CD14-positive monocyte (primary cell): ENCODE measurements at regions of chr1 and their contacts with region 1.

Region 1: DNA sequence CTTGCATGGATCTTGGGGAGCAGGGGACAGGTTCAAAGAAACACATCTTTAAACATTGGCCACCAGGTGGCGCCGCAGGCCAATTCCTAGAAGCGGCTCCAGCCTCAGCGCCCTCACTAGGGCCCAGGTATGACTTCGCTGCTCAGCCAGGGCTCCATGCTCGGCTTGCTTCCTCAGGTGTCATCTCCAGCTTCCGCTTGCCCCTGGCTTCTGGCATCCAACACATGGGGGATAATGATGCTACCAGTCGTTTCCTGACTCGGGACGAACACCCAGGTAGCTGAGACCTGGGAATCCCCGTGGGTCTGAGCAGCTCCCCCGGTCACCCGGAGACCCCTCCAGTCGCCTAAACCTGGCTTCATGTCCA is 8.5 kb upstream of the MEX3A start:
- DNase-seq: peak; percentile 67 to 86 (median 81)
- H3K4me3 ChIP-seq: peak overlapping the region in 1 of 3 experiments; percentile 60
- H3K4me3 Mint-ChIP-seq: peak overlapping the region in 1 of 2 donors; percentile 84
- H3K27ac ChIP-seq: peak overlapping the region; percentile 53 to 88
- H3K27ac Mint-ChIP-seq: peak overlapping the region; percentile 87 to 97 (median 93)
- H3K4me1 ChIP-seq: peaks cover 20 to 21% of the 10 kb centered on the region in 2 donors
- H3K4me1 Mint-ChIP-seq: peaks cover 22% of the 10 kb centered on the region
- H3K27me3 ChIP-seq: peaks cover 10 to 62% of the 10 kb centered on the region in 2 donors
- H3K27me3 Mint-ChIP-seq: peaks cover 66 to 82% (median 76%) of the 10 kb centered on the region in 3 donors
- CTCF ChIP-seq: peak; percentile 97

Region 2: DNA sequence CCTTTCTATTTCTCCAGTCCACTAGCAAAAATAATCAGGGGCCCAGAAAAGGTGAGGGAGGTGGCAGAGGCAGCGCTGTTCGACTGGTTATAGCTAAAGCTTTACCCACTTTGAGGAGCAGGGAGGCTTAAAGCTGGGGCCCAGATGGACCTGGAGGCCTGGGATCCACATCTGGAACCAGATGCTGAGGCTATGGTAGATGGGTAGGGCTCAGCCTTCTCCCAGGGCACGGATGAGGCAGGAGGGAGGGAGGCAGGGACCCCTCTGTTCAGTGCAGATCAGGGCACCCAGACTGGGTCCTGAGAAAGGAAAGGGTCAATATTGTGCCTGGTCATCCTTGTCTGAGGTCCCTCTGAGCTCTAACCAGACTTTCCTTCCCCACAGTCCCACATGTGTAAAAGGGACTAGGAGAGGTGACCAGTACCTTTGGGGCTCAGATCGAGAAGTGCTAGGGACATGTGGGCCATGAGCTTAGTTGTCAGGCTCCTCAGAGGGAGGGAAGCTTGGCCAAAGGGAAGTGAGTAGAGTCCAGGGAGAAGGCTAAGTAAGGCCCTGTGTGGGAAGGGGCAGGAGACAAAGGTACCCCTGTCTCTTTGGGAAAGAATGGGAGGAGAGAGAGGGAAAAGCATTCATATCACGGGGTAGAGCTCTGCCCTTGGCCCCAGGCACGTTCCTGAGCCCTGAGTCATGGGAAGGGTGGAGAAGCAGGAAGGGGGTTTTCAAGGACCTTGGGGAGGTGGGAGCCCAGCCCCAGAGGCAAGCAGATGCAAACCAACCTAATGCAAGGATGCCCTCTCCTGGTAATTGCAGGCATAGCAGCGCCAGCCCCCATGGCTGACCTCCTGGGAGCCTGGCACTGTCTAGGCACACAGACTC is 39.1 kb after region 1 on chr1:
- intact Hi-C with region 1: loop called (anchors 1 to 2 kb)
- DNase-seq: peak; percentile 75 to 92 (median 86)
- H3K4me3 ChIP-seq: no peak overlapping the region
- H3K4me3 Mint-ChIP-seq: peak overlapping the region in 1 of 2 donors; percentile 82
- H3K27ac ChIP-seq: no peak overlapping the region
- H3K27ac Mint-ChIP-seq: peak overlapping the region in 6 of 7 donors; percentile 23 to 86 (median 78)
- H3K4me1 ChIP-seq: peaks cover 42 to 46% of the 10 kb centered on the region in 2 donors
- H3K4me1 Mint-ChIP-seq: peaks cover 50% of the 10 kb centered on the region
- H3K27me3 ChIP-seq: peaks cover 30 to 89% of the 10 kb centered on the region in 2 donors
- H3K27me3 Mint-ChIP-seq: peaks cover 80 to 95% (median 93%) of the 10 kb centered on the region in 3 donors
- CTCF ChIP-seq: peak; percentile 97

Region 3: DNA sequence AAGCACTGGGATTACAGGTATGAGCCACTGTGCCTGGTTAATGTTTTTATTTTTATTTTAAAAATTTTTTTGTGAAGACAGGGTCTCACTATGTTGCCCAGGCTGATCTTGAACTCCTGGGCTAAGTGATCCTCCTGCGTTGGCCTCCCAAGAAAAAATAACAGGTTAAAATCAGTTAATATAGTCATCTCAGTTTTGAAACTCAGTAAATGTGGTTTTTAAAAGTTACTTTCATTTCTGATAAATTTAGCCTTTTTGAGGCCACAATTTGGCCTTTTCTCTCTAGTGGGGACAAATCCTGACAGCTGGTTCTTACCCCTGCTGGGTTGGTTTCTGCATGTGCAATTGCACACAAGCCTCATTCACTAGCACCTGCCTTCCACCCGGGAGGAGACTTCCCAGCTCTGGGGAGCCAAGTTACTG is 135.3 kb after region 1 on chr1:
- intact Hi-C with region 1: loop called (anchors 2 to 5 kb)
- DNase-seq: no peak
- H3K4me3 ChIP-seq: no peak overlapping the region
- H3K4me3 Mint-ChIP-seq: no peak overlapping the region
- H3K27ac ChIP-seq: no peak overlapping the region
- H3K27ac Mint-ChIP-seq: no peak overlapping the region
- H3K4me1 ChIP-seq: no peaks in the 10 kb centered on the region
- H3K4me1 Mint-ChIP-seq: peaks cover 4% of the 10 kb centered on the region
- H3K27me3 ChIP-seq: no peaks in the 10 kb centered on the region
- H3K27me3 Mint-ChIP-seq: no peaks in the 10 kb centered on the region
- CTCF ChIP-seq: no peak